ENCODE measurements at regions of chr14 and their contacts with region 1.

Region 1: GRCh38 chr14:81206115-81206514 is 14.6 kb downstream of the GTF2A1 start:
- DNase-seq: no peak
- H3K4me3 ChIP-seq: no peak overlapping the region
- H3K4me3 Mint-ChIP-seq: no peak overlapping the region
- H3K27ac ChIP-seq: no peak overlapping the region
- H3K27ac Mint-ChIP-seq: peak overlapping the region in 2 of 7 donors; percentile 4 to 54
- H3K4me1 ChIP-seq: peaks cover 6% of the 10 kb centered on the region
- H3K4me1 Mint-ChIP-seq: peaks cover 24 to 52% (median 31%) of the 10 kb centered on the region in 4 donors
- H3K27me3 ChIP-seq: no peaks in the 10 kb centered on the region
- H3K27me3 Mint-ChIP-seq: no peaks in the 10 kb centered on the region

Region 2: DNA sequence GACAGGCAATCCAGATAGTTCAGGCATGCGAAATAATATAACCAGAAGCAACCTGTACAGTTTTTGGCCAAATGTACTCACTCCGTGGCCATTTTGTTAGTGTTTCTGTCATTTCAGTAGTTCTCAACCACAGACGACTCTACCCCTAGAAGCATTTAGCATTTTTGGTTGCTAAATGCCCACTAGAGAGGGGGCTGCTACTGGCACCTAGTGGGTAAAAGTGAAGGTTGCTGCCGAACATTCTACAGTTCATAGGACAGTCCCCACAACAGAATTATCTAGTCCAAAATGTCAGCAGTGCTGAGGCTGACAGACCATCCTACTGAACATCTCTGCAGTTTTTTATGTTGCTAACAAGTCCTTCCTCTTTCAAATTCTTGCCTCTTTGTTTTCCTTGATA is 143.3 kb before region 1 on chr14:
- CTCF ChIA-PET with region 1: no interaction called
- POLR2A ChIA-PET with region 1: no interaction called
- intact Hi-C with region 1: no loop called
- DNase-seq: peak in 1 of 5 donors; percentile 2
- H3K4me3 ChIP-seq: no peak overlapping the region
- H3K4me3 Mint-ChIP-seq: no peak overlapping the region
- H3K27ac ChIP-seq: no peak overlapping the region
- H3K27ac Mint-ChIP-seq: no peak overlapping the region
- H3K4me1 ChIP-seq: no peaks in the 10 kb centered on the region
- H3K4me1 Mint-ChIP-seq: no peaks in the 10 kb centered on the region
- H3K27me3 ChIP-seq: no peaks in the 10 kb centered on the region
- H3K27me3 Mint-ChIP-seq: peaks cover 1 to 7% of the 10 kb centered on the region in 2 donors

Region 3: GRCh38 chr14:81113176-81113575 is 92.9 kb before region 1 on chr14:
- CTCF ChIA-PET with region 1: no interaction called
- POLR2A ChIA-PET with region 1: no interaction called
- intact Hi-C with region 1: no loop called
- DNase-seq: no peak
- H3K4me3 ChIP-seq: no peak overlapping the region
- H3K4me3 Mint-ChIP-seq: no peak overlapping the region
- H3K27ac ChIP-seq: no peak overlapping the region
- H3K27ac Mint-ChIP-seq: no peak overlapping the region
- H3K4me1 ChIP-seq: no peaks in the 10 kb centered on the region
- H3K4me1 Mint-ChIP-seq: no peaks in the 10 kb centered on the region
- H3K27me3 ChIP-seq: no peaks in the 10 kb centered on the region
- H3K27me3 Mint-ChIP-seq: peaks cover 0 to 3% of the 10 kb centered on the region in 2 donors

Region 4: GRCh38 chr14:81193924-81194633 is 12.0 kb before region 1 on chr14:
- CTCF ChIA-PET with region 1: interaction called, 4 read pairs
- POLR2A ChIA-PET with region 1: no interaction called
- intact Hi-C with region 1: loop called (anchors 2 kb)
- DNase-seq: no peak
- H3K4me3 ChIP-seq: no peak overlapping the region
- H3K4me3 Mint-ChIP-seq: no peak overlapping the region
- H3K27ac ChIP-seq: no peak overlapping the region
- H3K27ac Mint-ChIP-seq: peak overlapping the region; percentile 23 to 84 (median 69)
- H3K4me1 ChIP-seq: peaks cover 54% of the 10 kb centered on the region
- H3K4me1 Mint-ChIP-seq: peaks cover 34 to 60% (median 43%) of the 10 kb centered on the region in 4 donors
- H3K27me3 ChIP-seq: no peaks in the 10 kb centered on the region
- H3K27me3 Mint-ChIP-seq: no peaks in the 10 kb centered on the region

Region 5: GRCh38 chr14:81710234-81710845 is 504.2 kb after region 1 on chr14:
- CTCF ChIA-PET with region 1: no interaction called
- POLR2A ChIA-PET with region 1: no interaction called
- intact Hi-C with region 1: no loop called
- DNase-seq: no peak
- H3K4me3 ChIP-seq: no peak overlapping the region
- H3K4me3 Mint-ChIP-seq: no peak overlapping the region
- H3K27ac ChIP-seq: no peak overlapping the region
- H3K27ac Mint-ChIP-seq: no peak overlapping the region
- H3K4me1 ChIP-seq: no peaks in the 10 kb centered on the region
- H3K4me1 Mint-ChIP-seq: no peaks in the 10 kb centered on the region
- H3K27me3 ChIP-seq: no peaks in the 10 kb centered on the region
- H3K27me3 Mint-ChIP-seq: no peaks in the 10 kb centered on the region